Cardiac septum (tissue), 1 donor: ENCODE measurements at regions of chr10 and their contacts with region 1.

Region 1: GRCh38 chr10:126041781-126042231 is 145.4 kb downstream of the FANK1 start:
- DNase-seq: peak; percentile 93

Region 2: GRCh38 chr10:125788156-125789034 is 253.4 kb before region 1 on chr10:
- intact Hi-C with region 1: no loop called
- DNase-seq: no peak

Region 3: GRCh38 chr10:126153711-126154628 is 112.2 kb after region 1 on chr10:
- intact Hi-C with region 1: loop called (anchors 10 kb)
- DNase-seq: no peak